ENCODE measurements at regions of chr22 and their contacts with region 1.

Region 1: GRCh38 chr22:45553351-45554039 is 50.8 kb downstream of the FBLN1 start:
- DNase-seq: peak; percentile 78

Region 2: DNA sequence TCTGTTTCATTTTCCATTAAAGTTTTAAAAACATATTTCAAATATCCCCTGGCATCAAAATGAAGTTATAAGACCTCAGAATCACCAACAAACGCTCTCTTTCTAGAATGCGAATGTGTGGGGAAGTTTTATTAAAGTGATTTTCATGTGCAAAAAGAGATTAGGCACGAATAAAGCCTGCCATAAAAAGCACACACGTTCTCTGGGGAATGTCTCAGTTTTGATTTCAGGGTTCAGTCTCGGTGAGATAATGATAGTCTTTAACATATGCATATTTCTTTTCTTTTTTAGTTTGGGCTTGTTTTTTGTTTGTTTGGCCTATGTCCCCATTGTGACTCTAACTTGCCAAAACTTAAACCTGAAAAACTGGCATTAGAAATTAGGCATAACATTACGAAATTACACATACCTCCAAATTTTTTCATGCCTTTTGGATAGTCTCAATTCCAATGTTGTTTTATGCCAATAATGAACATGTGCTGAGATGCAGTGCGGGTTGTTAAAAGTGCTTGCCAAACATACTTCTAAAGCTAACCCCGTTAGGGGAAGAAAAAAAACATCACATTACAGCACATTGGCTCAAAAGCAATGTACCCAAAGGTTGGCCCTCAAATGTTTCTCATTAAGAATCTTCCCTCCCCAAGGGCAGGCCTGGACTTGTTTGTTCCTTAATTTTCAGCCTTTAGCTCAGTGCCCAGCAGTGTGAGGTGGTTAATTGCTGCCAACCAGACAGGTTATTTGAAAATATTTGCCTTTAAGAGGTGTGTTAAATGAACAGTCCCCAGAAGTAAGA is 84.0 kb before region 1 on chr22:
- in situ Hi-C with region 1: loop called (anchors 5 kb)
- DNase-seq: no peak

Region 3: DNA sequence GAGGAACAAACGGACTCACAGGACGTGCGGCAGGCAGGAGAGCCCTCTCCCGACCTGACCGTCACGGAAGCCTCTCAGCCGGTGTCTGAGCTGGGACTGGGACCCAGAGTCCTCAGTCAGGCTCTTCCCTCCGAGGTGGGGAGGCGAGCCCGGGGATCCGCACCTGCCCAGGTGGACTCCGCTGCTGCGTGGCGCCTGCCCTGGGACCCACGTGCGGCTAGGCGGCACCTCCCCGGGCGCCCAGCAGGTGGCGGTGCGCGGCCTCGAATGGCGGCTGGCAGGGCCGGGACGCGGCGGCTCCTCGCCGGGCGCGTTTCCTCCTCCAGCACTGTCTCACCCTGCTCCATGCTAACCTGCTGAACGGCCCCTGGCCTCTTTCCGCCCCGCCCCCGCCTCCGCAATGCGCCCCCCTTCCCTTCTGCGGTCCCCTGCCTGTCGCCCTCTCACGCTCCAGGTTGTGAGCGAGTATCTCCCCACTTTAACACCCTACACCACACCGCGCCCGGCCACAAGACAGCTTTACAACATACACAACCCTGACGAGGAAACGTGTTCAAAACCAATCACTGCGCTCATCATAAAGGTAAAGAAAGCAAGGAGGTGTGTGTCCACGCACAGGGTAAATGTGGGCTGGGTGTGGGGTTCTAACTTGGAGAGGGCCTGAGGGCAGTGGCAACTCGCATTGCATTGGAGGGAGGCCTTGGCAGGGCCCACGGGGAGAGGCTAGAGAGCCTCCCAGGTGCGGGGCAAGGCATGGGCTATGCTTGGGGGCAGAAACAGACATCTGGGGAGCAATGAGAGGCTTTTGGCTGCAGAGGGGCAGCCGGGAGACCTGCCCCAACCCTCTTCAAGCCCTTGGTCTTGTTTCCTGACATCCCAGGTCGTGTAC is 92.3 kb after region 1 on chr22:
- in situ Hi-C with region 1: no loop called
- DNase-seq: peak; percentile 36

Region 4: GRCh38 chr22:45831394-45831793 is 277.9 kb after region 1 on chr22:
- in situ Hi-C with region 1: no loop called
- DNase-seq: peak; percentile 21